PC-3 (cell line): ENCODE measurements at regions of chr4 and their contacts with region 1.

Region 1: DNA sequence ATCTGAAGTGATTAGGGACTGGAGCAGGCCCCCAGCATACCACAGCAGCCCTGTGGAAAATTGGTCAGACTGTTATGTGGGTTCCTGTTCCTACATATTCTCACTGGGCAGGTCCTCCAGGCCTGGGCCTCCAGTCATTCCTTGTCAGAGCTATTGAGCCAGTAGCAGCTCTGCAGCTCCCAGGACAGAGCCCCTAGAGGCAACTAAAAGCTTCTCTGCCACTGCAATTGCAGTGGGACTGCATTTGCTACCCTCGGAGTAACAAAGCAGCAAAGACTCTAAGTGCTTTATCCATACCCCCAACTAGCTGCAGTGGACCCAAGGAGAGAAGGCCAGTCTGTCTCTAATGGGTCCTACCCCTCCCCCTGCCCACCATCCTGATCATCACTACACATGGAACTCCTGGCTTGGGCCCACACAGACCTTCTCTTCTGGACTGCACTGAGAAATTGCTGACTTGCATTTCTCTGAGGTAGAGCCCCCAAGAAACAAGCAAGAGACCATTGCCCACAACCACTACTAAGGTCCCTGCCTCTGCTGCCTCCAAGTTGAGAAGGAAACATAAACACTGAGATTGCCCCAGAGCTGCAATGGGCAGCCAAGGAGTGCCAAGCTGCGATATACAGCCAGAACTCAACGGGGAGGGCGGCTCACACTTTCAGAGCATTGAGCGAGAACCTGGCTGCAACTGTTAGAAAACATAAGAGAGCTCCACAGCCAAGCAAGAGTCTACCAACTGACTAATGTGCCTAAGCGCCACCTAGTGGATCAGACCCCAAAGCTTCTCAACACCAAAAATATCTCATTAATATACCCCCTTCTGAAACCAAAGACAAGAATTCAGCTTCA is 738.7 kb upstream of the NDST4 start:
- DNase-seq: peak; percentile 59
- ATAC-seq: peak; percentile 64
- H3K4me3 ChIP-seq: no peak overlapping the region
- H3K27ac ChIP-seq: no peak overlapping the region
- H3K4me1 ChIP-seq: no peaks in the 10 kb centered on the region
- H3K27me3 ChIP-seq: no peaks in the 10 kb centered on the region
- CTCF ChIP-seq: peak; percentile 67

Region 2: DNA sequence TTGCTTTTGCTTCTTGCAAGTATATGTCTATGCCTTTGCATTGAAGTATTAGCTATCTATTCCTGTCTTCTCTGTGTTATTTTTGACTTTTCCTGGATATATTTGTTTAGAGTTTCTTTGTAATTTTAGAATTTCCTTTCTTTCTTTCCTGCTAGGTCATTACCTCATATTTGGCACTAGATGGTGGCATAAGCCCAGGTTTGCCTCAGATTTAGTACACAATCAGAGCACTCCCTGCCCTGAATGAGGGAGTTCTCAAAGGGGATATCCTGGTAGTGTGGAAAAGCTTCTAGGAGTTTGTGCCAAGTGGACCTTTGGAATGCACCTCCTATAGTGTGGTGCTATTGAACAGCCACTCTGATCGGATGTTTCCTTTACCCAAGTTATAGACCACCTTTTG is 1071.9 kb before region 1 on chr4:
- CTCF ChIA-PET with region 1: no interaction called
- POLR2A ChIA-PET with region 1: no interaction called
- intact Hi-C with region 1: loop called (anchors 2 kb)
- DNase-seq: peak; percentile 36
- ATAC-seq: peak; percentile 64; the same call in 1 of the 2 replicates
- H3K4me3 ChIP-seq: no peak overlapping the region
- H3K27ac ChIP-seq: no peak overlapping the region
- H3K4me1 ChIP-seq: no peaks in the 10 kb centered on the region
- H3K27me3 ChIP-seq: no peaks in the 10 kb centered on the region
- CTCF ChIP-seq: peak; percentile 59

Region 3: GRCh38 chr4:115090483-115091075 is 761.6 kb before region 1 on chr4:
- CTCF ChIA-PET with region 1: no interaction called
- POLR2A ChIA-PET with region 1: no interaction called
- intact Hi-C with region 1: loop called (anchors 5 kb)
- DNase-seq: peak; percentile 58
- ATAC-seq: no peak
- H3K4me3 ChIP-seq: no peak overlapping the region
- H3K27ac ChIP-seq: no peak overlapping the region
- H3K4me1 ChIP-seq: no peaks in the 10 kb centered on the region
- H3K27me3 ChIP-seq: no peaks in the 10 kb centered on the region
- CTCF ChIP-seq: peak; percentile 67

Region 4: GRCh38 chr4:115234405-115235093 is 617.6 kb before region 1 on chr4:
- CTCF ChIA-PET with region 1: no interaction called
- POLR2A ChIA-PET with region 1: no interaction called
- intact Hi-C with region 1: loop called (anchors 2 kb)
- DNase-seq: peak; percentile 42
- ATAC-seq: peak; percentile 56
- H3K4me3 ChIP-seq: no peak overlapping the region
- H3K27ac ChIP-seq: no peak overlapping the region
- H3K4me1 ChIP-seq: no peaks in the 10 kb centered on the region
- H3K27me3 ChIP-seq: no peaks in the 10 kb centered on the region
- CTCF ChIP-seq: peak; percentile 49

Region 5: GRCh38 chr4:115467181-115467741 is 384.9 kb before region 1 on chr4:
- CTCF ChIA-PET with region 1: no interaction called
- POLR2A ChIA-PET with region 1: no interaction called
- intact Hi-C with region 1: no loop called
- DNase-seq: no peak
- ATAC-seq: no peak
- H3K4me3 ChIP-seq: no peak overlapping the region
- H3K27ac ChIP-seq: no peak overlapping the region
- H3K4me1 ChIP-seq: no peaks in the 10 kb centered on the region
- H3K27me3 ChIP-seq: no peaks in the 10 kb centered on the region
- CTCF ChIP-seq: no peak

Region 6: GRCh38 chr4:115537387-115537786 is 314.8 kb before region 1 on chr4:
- CTCF ChIA-PET with region 1: no interaction called
- POLR2A ChIA-PET with region 1: no interaction called
- intact Hi-C with region 1: loop called (anchors 5 kb)
- DNase-seq: peak; percentile 27
- ATAC-seq: no peak
- H3K4me3 ChIP-seq: no peak overlapping the region
- H3K27ac ChIP-seq: no peak overlapping the region
- H3K4me1 ChIP-seq: no peaks in the 10 kb centered on the region
- H3K27me3 ChIP-seq: no peaks in the 10 kb centered on the region
- CTCF ChIP-seq: peak; percentile 42; the same call in 1 of the 2 replicates

Region 7: GRCh38 chr4:115548123-115548522 is 304.0 kb before region 1 on chr4:
- CTCF ChIA-PET with region 1: interaction called, 10 read pairs
- POLR2A ChIA-PET with region 1: no interaction called
- intact Hi-C with region 1: no loop called
- DNase-seq: no peak
- ATAC-seq: no peak
- H3K4me3 ChIP-seq: no peak overlapping the region
- H3K27ac ChIP-seq: no peak overlapping the region
- H3K4me1 ChIP-seq: no peaks in the 10 kb centered on the region
- H3K27me3 ChIP-seq: no peaks in the 10 kb centered on the region
- CTCF ChIP-seq: no peak

Region 8: DNA sequence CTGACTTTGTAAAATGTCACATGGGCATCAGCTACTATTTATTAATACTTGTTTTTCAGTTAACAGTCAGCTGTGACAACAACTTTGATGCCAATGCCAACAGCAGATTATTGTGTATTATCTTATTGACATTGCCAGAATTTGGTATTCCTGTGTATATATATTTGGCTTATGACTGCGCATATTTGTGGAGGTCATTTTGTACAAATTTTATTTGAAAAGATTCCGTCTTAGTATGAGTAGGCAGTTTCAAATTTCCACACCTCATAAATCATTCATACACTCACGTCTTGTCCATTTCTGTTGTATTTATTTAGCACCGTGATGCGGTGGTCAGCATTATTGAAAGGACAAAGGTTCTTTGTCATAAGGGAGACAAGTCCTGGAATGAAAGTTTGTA is 180.6 kb before region 1 on chr4:
- CTCF ChIA-PET with region 1: no interaction called
- POLR2A ChIA-PET with region 1: no interaction called
- intact Hi-C with region 1: loop called (anchors 5 kb)
- DNase-seq: peak; percentile 70
- ATAC-seq: peak; percentile 91
- H3K4me3 ChIP-seq: no peak overlapping the region
- H3K27ac ChIP-seq: no peak overlapping the region
- H3K4me1 ChIP-seq: 0 out of 2 replicates have a peak, but pooled peaks cover 7% of the 10 kb centered on the region
- H3K27me3 ChIP-seq: no peaks in the 10 kb centered on the region
- CTCF ChIP-seq: no peak